Gastrocnemius medialis (tissue), 4 donors: ENCODE measurements at regions of chr10 and their contacts with region 1.

Region 1: GRCh38 chr10:77926566-77927401 is at the start of gene DLG5:
- DNase-seq: peak; percentile 43 to 59
- ATAC-seq: peak; percentile 71 to 75
- H3K4me3 ChIP-seq: peak within 1 kb of the TSS; percentile 63 to 92 (median 78)
- H3K27ac ChIP-seq: peak within 1 kb of the TSS; percentile 79 to 91 (median 84)
- H3K4me1 ChIP-seq: peaks cover 22 to 23% of the 10 kb centered on the region in 2 donors
- H3K27me3 ChIP-seq: no peaks in the 10 kb centered on the region
- CTCF ChIP-seq: peak in 3 of 5 experiments; percentile 23 to 29 (median 25)
- POLR2A ChIP-seq: peak; percentile 53 to 64
- total RNA-seq, gene DLG5: 28.6 to 51.2 (median 40.3) TPM

Region 2: GRCh38 chr10:77784856-77785255 is 141.9 kb before region 1 on chr10:
- in situ Hi-C with region 1: no loop called
- intact Hi-C with region 1: no loop called
- DNase-seq: no peak
- ATAC-seq: no peak
- H3K4me3 ChIP-seq: no peak overlapping the region
- H3K27ac ChIP-seq: no peak overlapping the region
- H3K4me1 ChIP-seq: peaks cover 0 to 4% of the 10 kb centered on the region in 2 donors
- H3K27me3 ChIP-seq: no peaks in the 10 kb centered on the region
- CTCF ChIP-seq: no peak
- POLR2A ChIP-seq: no peak

Region 3: DNA sequence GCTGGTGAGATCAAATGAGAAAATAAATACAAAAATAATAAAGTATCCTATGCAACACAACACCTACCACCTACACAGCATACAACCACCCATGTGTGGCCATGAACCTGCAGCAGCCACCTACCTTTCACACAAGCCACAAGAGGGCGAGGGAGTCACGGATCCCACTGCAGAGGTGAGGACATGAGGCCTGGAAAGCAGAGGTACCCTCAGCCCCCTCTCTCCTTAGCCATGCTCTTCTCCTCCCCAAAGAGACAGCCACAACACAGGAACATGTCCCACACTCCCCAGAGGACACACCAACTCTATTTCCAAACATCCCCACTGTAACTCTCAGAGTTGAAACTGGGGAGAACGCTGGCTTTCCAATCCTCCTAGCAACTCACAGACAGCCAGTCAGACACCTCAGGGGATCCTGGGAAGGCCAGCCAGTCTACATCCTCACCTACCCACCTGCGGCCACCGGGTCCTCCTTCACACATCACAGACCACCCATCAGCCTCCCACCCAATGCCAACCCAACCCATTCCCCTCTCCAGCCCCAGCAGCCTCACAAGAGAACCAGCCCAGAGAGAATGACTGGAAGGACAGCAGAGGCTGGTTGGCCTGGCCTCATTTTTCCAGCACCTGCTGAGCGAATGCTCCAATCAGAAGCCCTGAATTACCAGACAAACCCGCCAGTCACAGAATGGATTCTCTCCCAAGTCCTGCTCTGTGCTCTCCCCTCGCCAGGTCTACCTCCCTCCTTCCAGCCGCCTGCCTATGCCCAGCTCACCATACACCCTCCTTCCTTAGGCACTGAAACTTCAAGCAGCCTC is 18.7 kb before region 1 on chr10:
- in situ Hi-C with region 1: no loop called
- intact Hi-C with region 1: loop called (anchors 1 kb)
- DNase-seq: peak in 1 of 2 donors; percentile 39
- ATAC-seq: peak; percentile 36 to 42
- H3K4me3 ChIP-seq: no peak overlapping the region
- H3K27ac ChIP-seq: peak overlapping the region in 2 of 4 donors; percentile 11 to 15
- H3K4me1 ChIP-seq: peaks cover 58 to 59% of the 10 kb centered on the region in 2 donors
- H3K27me3 ChIP-seq: no peaks in the 10 kb centered on the region
- CTCF ChIP-seq: peak in 3 of 5 experiments; percentile 28 to 41 (median 29)
- POLR2A ChIP-seq: no peak

Region 4: GRCh38 chr10:77970869-77971803 is 44.4 kb after region 1 on chr10:
- in situ Hi-C with region 1: no loop called
- intact Hi-C with region 1: loop called (anchors 2 kb)
- DNase-seq: peak; percentile 90 to 94
- ATAC-seq: peak; percentile 94 to 96
- H3K4me3 ChIP-seq: peak overlapping the region; percentile 19 to 38 (median 32)
- H3K27ac ChIP-seq: peak overlapping the region; percentile 86 to 95 (median 90)
- H3K4me1 ChIP-seq: peaks cover 31 to 52% of the 10 kb centered on the region in 2 donors
- H3K27me3 ChIP-seq: no peaks in the 10 kb centered on the region
- CTCF ChIP-seq: no peak
- POLR2A ChIP-seq: peak in 1 of 2 donors; percentile 59

Region 5: GRCh38 chr10:78004215-78005026 is 77.6 kb after region 1 on chr10:
- in situ Hi-C with region 1: no loop called
- intact Hi-C with region 1: loop called (anchors 1 kb)
- DNase-seq: peak; percentile 46 to 74
- ATAC-seq: peak; percentile 64 to 68
- H3K4me3 ChIP-seq: no peak overlapping the region
- H3K27ac ChIP-seq: peak overlapping the region; percentile 77 to 89 (median 87)
- H3K4me1 ChIP-seq: peaks cover 6 to 55% of the 10 kb centered on the region in 2 donors
- H3K27me3 ChIP-seq: no peaks in the 10 kb centered on the region
- CTCF ChIP-seq: peak in 4 of 5 experiments; percentile 20 to 60 (median 52)
- POLR2A ChIP-seq: no peak